ENCODE measurements at regions of chr18 and their contacts with region 1.

Region 1: DNA sequence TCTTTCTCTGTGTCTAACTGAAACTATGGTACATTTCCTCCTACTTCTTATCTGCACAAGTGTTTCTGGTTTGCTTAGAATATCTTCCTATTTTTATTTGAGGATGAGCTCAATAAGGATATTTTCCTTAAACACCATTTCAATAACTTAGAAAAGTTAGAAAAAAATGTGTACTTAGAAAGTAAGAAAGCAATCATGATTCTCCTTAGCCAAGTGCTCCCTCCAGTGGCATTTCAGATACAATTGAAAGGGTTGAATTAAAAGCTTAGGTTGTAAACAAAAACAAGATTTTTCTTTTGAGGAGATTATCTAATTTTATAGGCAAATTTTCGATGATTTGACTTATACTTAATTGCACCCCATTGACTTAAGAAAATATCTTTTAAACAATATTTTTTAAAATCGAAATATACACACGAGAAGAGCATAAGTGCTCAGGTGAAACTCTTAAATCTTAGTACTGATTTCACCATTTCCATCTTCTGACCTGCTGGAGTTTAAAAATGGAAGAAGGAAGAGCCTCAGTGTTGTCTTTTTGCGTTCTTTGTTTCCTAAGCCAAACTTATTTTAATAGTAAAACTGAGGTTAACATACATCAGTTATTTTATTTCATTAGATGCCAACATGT is 26.9 kb downstream of the C18orf63 start:
- DNase-seq: peak; percentile 70 to 88 (median 82)
- H3K4me3 ChIP-seq: no peak overlapping the region
- H3K27ac ChIP-seq: no peak overlapping the region
- H3K4me1 ChIP-seq: no peaks in the 10 kb centered on the region
- H3K27me3 ChIP-seq: no peaks in the 10 kb centered on the region

Region 2: DNA sequence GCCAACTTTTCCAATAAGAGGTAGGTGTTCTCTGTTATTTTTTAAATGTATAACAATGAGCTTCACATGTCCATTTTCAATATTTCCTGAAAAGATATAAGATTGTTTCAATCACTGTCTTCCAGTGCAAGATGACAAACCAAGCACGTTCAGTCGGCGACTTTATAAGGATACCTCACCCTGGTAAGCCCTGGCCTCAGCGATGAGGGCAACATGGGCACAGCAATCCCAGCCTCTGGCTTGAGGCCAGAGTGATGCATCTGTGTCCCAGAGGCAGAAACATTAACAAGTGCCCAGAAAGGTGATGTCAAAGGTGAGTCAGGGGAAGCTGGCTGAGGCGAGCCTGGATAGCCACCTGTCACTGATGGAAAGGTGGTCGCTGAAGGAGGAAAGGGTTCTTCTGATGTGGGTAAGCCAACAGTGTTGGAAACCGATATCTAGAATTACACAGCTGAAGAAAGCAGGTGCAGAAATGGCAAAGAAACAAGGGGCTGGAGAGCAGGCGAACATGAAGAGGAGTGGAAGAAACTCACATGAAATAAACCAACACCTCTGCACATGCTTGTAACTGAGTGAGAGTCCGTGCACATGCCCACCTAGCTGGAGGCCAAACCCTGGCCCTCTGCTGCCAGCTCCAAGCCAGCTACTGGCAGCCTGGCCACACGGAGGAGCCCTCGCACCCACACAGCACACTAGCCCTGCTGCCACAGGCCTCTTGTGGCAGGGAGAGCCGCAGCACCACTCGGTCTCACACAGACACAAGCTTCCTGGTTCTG is 260.4 kb before region 1 on chr18:
- CTCF ChIA-PET with region 1: interaction called, 14 read pairs
- POLR2A ChIA-PET with region 1: no interaction called
- DNase-seq: peak; percentile 63 to 83 (median 76)
- H3K4me3 ChIP-seq: peak overlapping the region in 2 of 7 experiments; percentile 27 to 37
- H3K27ac ChIP-seq: no peak overlapping the region
- H3K4me1 ChIP-seq: peaks cover 0 to 6% (median 3%) of the 10 kb centered on the region in 4 experiments
- H3K27me3 ChIP-seq: no peaks in the 10 kb centered on the region

Region 3: GRCh38 chr18:74196220-74197119 is 146.1 kb before region 1 on chr18:
- CTCF ChIA-PET with region 1: interaction called, 48 read pairs
- POLR2A ChIA-PET with region 1: no interaction called
- DNase-seq: peak; percentile 70 to 88 (median 85)
- H3K4me3 ChIP-seq: peak overlapping the region in 6 of 7 experiments; percentile 44 to 81 (median 56)
- H3K27ac ChIP-seq: peak overlapping the region in 1 of 2 experiments; percentile 45
- H3K4me1 ChIP-seq: peaks cover 0 to 3% (median 0%) of the 10 kb centered on the region in 4 experiments
- H3K27me3 ChIP-seq: peaks cover 0 to 7% (median 5%) of the 10 kb centered on the region in 5 experiments

Region 4: GRCh38 chr18:74353169-74353775 is 10.7 kb after region 1 on chr18:
- CTCF ChIA-PET with region 1: interaction called, 14 read pairs
- POLR2A ChIA-PET with region 1: no interaction called
- DNase-seq: peak; percentile 72 to 81 (median 74)
- H3K4me3 ChIP-seq: no peak overlapping the region
- H3K27ac ChIP-seq: no peak overlapping the region
- H3K4me1 ChIP-seq: peaks cover 0 to 9% (median 1%) of the 10 kb centered on the region in 4 experiments
- H3K27me3 ChIP-seq: no peaks in the 10 kb centered on the region

Region 5: GRCh38 chr18:74506425-74507119 is 164.0 kb after region 1 on chr18:
- CTCF ChIA-PET with region 1: no interaction called
- POLR2A ChIA-PET with region 1: no interaction called
- DNase-seq: peak in 2 of 3 donors; percentile 55
- H3K4me3 ChIP-seq: no peak overlapping the region
- H3K27ac ChIP-seq: peak overlapping the region in 1 of 2 experiments; percentile 51
- H3K4me1 ChIP-seq: peaks cover 0 to 11% (median 0%) of the 10 kb centered on the region in 4 experiments
- H3K27me3 ChIP-seq: no peaks in the 10 kb centered on the region

Region 6: GRCh38 chr18:74604774-74605173 is 262.2 kb after region 1 on chr18:
- CTCF ChIA-PET with region 1: no interaction called
- POLR2A ChIA-PET with region 1: no interaction called
- DNase-seq: no peak
- H3K4me3 ChIP-seq: no peak overlapping the region
- H3K27ac ChIP-seq: no peak overlapping the region
- H3K4me1 ChIP-seq: no peaks in the 10 kb centered on the region
- H3K27me3 ChIP-seq: no peaks in the 10 kb centered on the region

Region 7: GRCh38 chr18:74951165-74951760 is 608.7 kb after region 1 on chr18:
- CTCF ChIA-PET with region 1: no interaction called
- POLR2A ChIA-PET with region 1: no interaction called
- DNase-seq: no peak
- H3K4me3 ChIP-seq: no peak overlapping the region
- H3K27ac ChIP-seq: no peak overlapping the region
- H3K4me1 ChIP-seq: peaks cover 0 to 3% (median 0%) of the 10 kb centered on the region in 4 experiments
- H3K27me3 ChIP-seq: no peaks in the 10 kb centered on the region

Measured in common myeloid progenitor, CD34-positive (primary cell).